Activated T-helper 1 cell treated with anti-CD3 and anti-CD28 coated beads, Interleukin-12 subunit alpha, Interleukin-12 subunit beta, Interleukin-2, Interleukin-4 antibody, amounts not matched to agents 30 ng/mL and 10 ng/mL and 1 ng/mL, durations not matched to agents 14 hours and 24 hours and 36 hours (primary cell): ENCODE measurements at regions of chr9 and their contacts with region 1.

Region 1: DNA sequence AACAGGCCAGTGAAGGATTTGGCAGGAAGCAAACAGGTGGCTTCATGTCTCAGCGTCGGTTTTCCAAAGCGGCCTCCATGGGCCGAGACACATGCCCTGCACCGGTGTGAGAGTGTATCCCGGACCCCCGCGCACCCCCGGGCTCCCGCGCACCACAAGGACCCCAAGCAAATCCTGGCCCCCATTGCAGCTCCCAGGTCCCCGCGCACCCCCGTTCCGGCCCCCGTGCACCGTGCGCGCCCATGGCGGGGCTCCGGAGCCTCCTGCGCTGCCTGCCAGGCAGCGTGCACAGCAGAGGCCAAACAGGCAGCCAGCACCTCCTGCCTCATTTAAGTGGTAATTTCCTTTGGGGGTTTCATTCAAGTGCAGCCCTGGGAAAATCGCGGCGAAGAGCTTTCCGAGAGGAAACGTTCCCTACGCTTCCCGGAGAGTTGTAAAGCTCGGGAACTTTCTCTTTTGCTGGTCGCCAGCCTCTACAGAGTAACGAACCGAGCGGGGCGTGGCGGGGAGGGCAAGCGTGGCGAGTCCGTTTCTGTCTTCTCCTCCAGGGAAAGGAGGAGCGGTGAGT is 145.5 kb upstream of the SLC24A2 start:
- DNase-seq: no peak
- H3K4me3 Mint-ChIP-seq: peak overlapping the region; percentile 62
- H3K27ac Mint-ChIP-seq: no peak overlapping the region
- H3K4me1 Mint-ChIP-seq: peaks cover 14% of the 10 kb centered on the region
- H3K27me3 Mint-ChIP-seq: peaks cover 4% of the 10 kb centered on the region

Region 2: GRCh38 chr9:20070336-20070735 is 136.0 kb after region 1 on chr9:
- intact Hi-C with region 1: no loop called
- DNase-seq: no peak
- H3K4me3 Mint-ChIP-seq: no peak overlapping the region
- H3K27ac Mint-ChIP-seq: no peak overlapping the region
- H3K4me1 Mint-ChIP-seq: peaks cover 6% of the 10 kb centered on the region
- H3K27me3 Mint-ChIP-seq: no peaks in the 10 kb centered on the region

Region 3: GRCh38 chr9:20437476-20437875 is 503.1 kb after region 1 on chr9:
- intact Hi-C with region 1: loop called (anchors 5 kb)
- DNase-seq: no peak
- H3K4me3 Mint-ChIP-seq: no peak overlapping the region
- H3K27ac Mint-ChIP-seq: no peak overlapping the region
- H3K4me1 Mint-ChIP-seq: peaks cover 30% of the 10 kb centered on the region
- H3K27me3 Mint-ChIP-seq: no peaks in the 10 kb centered on the region